Activated CD8-positive, alpha-beta memory T cell treated with anti-CD3 and anti-CD28 coated beads, Interleukin-2, amount 10 ng/mL, durations not matched to agents 7 days and 5 days (primary cell): ENCODE measurements at regions of chr15 and their contacts with region 1.

Region 1: DNA sequence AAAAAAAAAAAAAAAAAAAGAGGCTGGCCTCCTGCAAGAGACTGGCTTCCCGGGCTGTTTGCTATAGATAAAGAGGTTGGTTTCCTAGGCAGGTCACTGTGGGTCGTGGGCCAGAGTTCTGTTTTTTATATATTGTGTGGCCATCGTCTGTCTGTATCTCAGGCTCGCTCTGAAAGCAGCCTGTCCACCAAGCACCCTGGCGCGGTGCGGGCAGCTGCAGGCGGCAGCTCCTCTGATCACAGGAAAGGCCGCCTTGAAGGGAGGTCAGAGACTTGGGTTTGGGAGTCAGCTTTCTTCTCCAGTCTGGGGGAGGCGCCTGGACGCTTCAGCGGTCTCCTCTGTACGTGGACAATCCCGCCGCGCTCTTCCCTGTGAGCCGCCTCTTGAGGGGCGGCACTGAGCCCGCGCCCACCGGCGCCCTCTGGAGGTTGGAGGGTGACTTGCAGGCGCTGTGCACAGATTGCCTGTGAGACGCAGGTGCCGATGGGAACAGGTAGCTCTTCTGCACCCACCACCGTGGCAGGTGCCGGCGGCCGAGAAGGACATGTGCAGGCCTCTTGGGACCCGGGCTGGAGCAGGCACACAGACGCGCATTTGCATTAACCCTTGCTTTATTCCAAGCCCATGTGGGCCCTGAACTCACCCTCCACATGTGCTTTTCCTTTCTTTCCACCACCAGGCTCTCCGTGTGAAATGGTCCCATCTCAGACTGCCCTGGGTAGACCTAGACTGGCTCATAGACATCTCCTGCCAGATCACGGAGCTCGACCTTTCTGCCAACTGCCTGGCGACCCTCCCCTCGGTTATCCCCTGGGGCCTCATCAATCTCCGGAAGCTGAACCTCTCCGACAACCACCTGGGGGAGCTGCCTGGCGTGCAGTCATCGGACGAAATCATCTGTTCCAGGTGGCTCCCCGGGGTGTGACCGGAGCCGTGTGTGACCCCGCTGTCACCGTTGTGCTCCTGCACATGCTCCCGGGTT is 89.3 kb downstream of the LRRK1 start:
- DNase-seq: peak; percentile 87
- ATAC-seq: peak; percentile 95
- H3K4me3 Mint-ChIP-seq: peak overlapping the region; percentile 82
- H3K27ac Mint-ChIP-seq: no peak overlapping the region
- H3K4me1 Mint-ChIP-seq: peaks cover 23% of the 10 kb centered on the region
- H3K27me3 Mint-ChIP-seq: peaks cover 26% of the 10 kb centered on the region

Region 2: GRCh38 chr15:100349696-100350433 is 658.6 kb before region 1 on chr15:
- CTCF ChIA-PET with region 1: interaction called, 54 read pairs
- DNase-seq: peak; percentile 89
- ATAC-seq: peak; percentile 97
- H3K4me3 Mint-ChIP-seq: peak overlapping the region; percentile 77
- H3K27ac Mint-ChIP-seq: peak overlapping the region; percentile 79
- H3K4me1 Mint-ChIP-seq: peaks cover 6% of the 10 kb centered on the region
- H3K27me3 Mint-ChIP-seq: peaks cover 21% of the 10 kb centered on the region

Region 3: DNA sequence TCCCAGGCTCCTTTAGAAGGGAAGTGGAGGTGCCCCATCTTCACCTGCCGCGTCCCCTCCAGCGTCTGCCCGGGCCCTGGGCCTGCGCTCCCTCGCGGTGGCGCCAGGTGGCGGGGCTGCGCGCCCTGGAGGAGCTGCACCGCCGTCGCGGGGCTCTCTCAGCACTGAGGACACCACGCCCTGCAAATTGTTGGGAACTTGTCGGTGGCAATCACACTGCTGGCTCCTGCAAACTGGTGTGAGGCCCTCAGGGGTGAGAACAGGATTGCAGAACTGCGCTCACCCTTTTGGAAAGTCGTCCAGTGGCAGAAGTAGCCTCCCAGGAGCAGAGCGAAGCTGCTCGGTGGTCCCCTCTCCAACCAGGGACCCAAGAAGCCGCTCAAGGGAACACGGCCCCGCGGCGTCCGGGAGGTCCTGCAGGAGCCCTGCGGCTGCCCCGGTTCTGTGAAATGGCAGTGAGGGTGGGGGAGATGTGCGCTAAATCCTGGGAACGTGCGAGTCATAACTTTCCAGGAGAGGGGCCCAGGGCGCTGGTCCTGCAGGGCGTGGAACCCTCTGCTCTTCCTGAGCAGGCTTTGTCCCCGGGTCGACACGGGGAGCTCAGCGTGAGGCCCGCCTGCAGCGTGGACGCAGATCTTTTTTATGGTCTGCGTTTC is 90.3 kb before region 1 on chr15:
- CTCF ChIA-PET with region 1: interaction called, 289 read pairs
- DNase-seq: peak; percentile 78
- ATAC-seq: peak; percentile 94
- H3K4me3 Mint-ChIP-seq: peak overlapping the region; percentile 64
- H3K27ac Mint-ChIP-seq: no peak overlapping the region
- H3K4me1 Mint-ChIP-seq: peaks cover 26% of the 10 kb centered on the region
- H3K27me3 Mint-ChIP-seq: peaks cover 83% of the 10 kb centered on the region

Region 4: DNA sequence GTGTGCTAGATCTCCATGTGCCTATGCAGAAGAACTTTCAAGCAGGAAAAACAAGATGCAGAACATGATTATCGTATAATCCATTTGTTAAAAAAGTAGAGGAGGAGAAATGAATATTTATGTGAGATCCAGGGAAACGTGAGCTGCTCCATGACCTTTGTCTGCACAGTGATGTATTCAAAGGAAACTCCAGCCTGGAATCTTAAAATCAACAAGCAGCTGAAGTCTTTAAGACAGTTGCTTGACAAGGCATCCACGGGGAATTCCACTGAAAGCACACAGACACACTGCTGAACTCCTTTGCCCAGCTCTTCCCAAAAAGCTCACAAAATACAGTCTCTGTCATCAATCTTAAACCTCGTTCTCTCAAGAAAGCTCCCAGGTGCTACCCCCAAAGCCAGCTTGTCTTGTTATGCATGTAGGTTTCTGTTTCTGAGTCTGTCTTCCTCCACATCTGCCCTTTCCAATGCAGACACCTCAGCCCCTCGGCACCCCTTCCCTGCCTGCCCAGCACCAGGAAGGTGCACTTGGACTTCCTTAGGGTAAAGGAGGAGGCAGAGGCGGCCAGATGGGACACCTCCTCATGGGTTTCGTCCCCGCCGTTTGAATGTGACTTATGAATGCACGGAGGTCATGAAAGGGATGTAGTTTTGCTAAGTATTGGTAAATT is 60.6 kb before region 1 on chr15:
- CTCF ChIA-PET with region 1: no interaction called
- DNase-seq: no peak
- ATAC-seq: no peak
- H3K4me3 Mint-ChIP-seq: no peak overlapping the region
- H3K27ac Mint-ChIP-seq: no peak overlapping the region
- H3K4me1 Mint-ChIP-seq: no peaks in the 10 kb centered on the region
- H3K27me3 Mint-ChIP-seq: peaks cover 30% of the 10 kb centered on the region

Region 5: DNA sequence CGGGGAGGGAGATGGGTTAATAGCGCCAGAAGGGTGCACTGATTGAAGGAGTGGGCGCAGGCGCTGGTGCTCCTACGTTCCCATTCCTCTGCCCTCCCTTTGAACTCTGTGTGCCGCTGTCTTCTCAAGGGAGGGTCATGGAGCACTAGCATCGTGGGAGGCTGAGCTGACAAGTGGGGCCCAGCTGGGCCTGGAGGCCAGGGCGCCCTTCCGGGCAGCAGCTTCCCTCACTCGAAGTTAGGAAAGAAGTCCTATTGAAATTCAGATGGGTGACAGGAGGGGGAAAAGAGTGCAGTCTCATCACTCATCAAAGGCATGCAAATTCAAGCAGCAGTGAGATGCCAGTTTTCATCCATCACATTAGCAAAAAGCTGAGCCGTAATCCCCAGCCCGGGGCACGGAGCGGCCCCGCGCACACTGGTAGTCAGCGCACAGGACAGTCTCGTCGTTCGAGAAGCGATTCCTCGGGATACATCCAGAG is 38.9 kb after region 1 on chr15:
- CTCF ChIA-PET with region 1: interaction called, 10 read pairs
- DNase-seq: peak; percentile 21
- ATAC-seq: no peak
- H3K4me3 Mint-ChIP-seq: no peak overlapping the region
- H3K27ac Mint-ChIP-seq: no peak overlapping the region
- H3K4me1 Mint-ChIP-seq: no peaks in the 10 kb centered on the region
- H3K27me3 Mint-ChIP-seq: peaks cover 1% of the 10 kb centered on the region

Region 6: DNA sequence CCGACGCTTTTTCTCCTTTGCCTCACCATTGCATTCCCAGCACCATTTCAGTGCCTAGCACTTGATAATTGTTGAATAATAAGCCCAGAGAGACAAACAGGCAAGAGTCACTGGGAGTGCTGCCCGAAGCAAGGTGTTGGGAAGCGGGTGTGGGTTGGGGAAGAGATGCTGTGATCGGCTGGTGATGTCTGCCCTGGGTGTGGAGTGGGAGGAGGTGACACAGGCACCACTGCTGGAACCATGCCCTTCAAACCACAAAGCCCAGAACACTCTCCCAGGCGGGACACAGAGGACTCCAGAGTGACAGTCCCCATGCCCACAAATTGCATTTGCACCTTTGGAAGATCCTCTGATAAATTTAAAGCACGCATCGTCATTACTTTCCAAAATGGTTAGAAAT is 95.1 kb after region 1 on chr15:
- CTCF ChIA-PET with region 1: no interaction called
- DNase-seq: no peak
- ATAC-seq: no peak
- H3K4me3 Mint-ChIP-seq: no peak overlapping the region
- H3K27ac Mint-ChIP-seq: no peak overlapping the region
- H3K4me1 Mint-ChIP-seq: peaks cover 12% of the 10 kb centered on the region
- H3K27me3 Mint-ChIP-seq: no peaks in the 10 kb centered on the region

Region 7: GRCh38 chr15:101167753-101168463 is 159.5 kb after region 1 on chr15:
- CTCF ChIA-PET with region 1: no interaction called
- DNase-seq: peak; percentile 93
- ATAC-seq: peak; percentile 96
- H3K4me3 Mint-ChIP-seq: peak overlapping the region; percentile 45
- H3K27ac Mint-ChIP-seq: peak overlapping the region; percentile 90
- H3K4me1 Mint-ChIP-seq: peaks cover 39% of the 10 kb centered on the region
- H3K27me3 Mint-ChIP-seq: no peaks in the 10 kb centered on the region

Region 8: GRCh38 chr15:101251830-101252820 is 243.7 kb after region 1 on chr15 and contains the start of gene CHSY1:
- CTCF ChIA-PET with region 1: interaction called, 108 read pairs
- DNase-seq: peak; percentile 92
- ATAC-seq: peak; percentile 82
- H3K4me3 Mint-ChIP-seq: peak within 1 kb of the TSS; percentile 85
- H3K27ac Mint-ChIP-seq: peak within 1 kb of the TSS; percentile 89
- H3K4me1 Mint-ChIP-seq: peaks cover 69% of the 10 kb centered on the region
- H3K27me3 Mint-ChIP-seq: no peaks in the 10 kb centered on the region
- total RNA-seq, gene CHSY1: 50.5 to 59.4 TPM

Region 9: DNA sequence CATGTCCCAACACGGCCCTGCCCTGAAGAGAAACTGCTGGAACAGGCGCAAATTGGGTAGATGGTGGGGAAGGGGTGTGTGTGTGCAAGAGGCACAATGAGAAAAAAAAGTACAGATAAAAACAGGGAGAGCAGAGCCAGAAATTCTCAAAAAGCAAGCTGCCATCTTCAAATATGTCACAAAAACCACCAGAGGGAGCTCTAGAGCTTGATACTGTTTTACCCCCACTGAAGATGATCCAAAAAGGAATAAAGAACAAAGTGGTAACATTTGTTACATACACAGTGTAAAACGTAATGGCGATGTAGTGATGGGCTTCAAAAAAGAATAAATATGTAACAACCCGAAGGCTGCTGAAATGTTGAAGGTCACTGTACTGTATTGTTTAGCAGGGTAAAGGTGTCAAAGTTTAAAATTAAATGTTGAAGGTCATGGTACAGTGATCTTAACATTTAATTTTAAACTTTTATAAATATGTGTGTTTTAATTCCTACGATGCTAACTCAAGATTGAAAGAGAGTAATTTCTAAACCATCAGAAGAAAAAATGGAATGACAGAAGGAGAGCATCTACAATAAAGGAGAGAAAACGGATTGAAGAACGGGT is 280.6 kb after region 1 on chr15:
- CTCF ChIA-PET with region 1: interaction called, 15 read pairs
- DNase-seq: no peak
- ATAC-seq: peak; percentile 52
- H3K4me3 Mint-ChIP-seq: no peak overlapping the region
- H3K27ac Mint-ChIP-seq: peak overlapping the region; percentile 70
- H3K4me1 Mint-ChIP-seq: peaks cover 61% of the 10 kb centered on the region
- H3K27me3 Mint-ChIP-seq: no peaks in the 10 kb centered on the region

Region 10: GRCh38 chr15:101307048-101307896 is 298.8 kb after region 1 on chr15:
- CTCF ChIA-PET with region 1: no interaction called
- DNase-seq: no peak
- ATAC-seq: no peak
- H3K4me3 Mint-ChIP-seq: no peak overlapping the region
- H3K27ac Mint-ChIP-seq: no peak overlapping the region
- H3K4me1 Mint-ChIP-seq: no peaks in the 10 kb centered on the region
- H3K27me3 Mint-ChIP-seq: no peaks in the 10 kb centered on the region